K562 (cell line): ENCODE measurements at regions of chr1 and their contacts with region 1.

Region 1: DNA sequence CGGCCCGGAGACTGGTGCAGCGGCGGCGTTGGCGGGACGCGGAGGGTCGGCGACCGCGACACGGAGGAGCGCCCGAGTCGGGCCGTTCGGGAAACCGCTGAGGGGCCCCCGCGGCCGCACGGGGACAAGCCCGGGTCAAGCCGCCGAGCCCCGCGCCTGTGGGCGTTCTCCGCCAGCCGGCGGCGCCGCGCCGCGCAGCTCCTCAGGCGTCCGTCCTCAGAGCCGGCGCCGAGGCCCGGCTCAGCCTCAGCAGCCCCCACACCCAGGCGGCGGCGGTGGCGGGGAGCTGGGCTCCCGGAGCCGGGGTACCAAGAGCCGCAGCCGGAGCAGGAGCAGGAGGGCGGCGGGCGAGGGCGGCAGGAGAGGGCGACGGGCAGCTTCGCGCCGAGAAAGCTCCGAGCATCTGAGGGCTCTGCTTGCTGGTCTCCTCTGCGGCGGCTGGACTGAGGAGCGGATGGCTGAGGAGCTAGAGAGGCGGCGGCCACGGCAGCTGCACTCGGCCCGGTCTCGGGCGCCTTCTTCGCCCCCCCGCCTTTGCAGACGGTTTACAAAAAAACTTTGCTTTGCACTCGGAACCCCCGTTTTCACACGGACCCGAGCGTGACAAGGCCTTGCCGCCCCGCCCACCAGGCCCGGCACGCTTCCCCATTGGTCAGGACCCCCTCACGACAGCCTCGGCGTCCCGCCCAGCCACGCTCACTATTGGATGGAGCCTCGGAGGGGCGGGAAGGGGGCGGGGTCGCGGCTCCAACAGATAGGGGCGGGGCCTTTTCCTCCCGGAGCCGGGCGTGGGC is at the start of gene SLC30A1:
- DNase-seq: peak; percentile 100
- ATAC-seq: peak; percentile 92
- H3K4me3 ChIP-seq: peak within 1 kb of the TSS; percentile 75
- H3K27ac ChIP-seq: peak within 1 kb of the TSS; percentile 84
- H3K4me1 ChIP-seq: peaks cover 26% of the 10 kb centered on the region in 2 experiments; a peak in 4 of 5 replicates
- H3K27me3 ChIP-seq: no peaks in the 10 kb centered on the region
- CTCF ChIP-seq: peak in 2 of 3 experiments; percentile 17 to 41; a peak in 1 of 6 replicates
- EP300 ChIP-seq: peak; percentile 23; the same call in 1 of the 2 replicates
- POLR2A ChIP-seq: peak; percentile 82
- RAD21 ChIP-seq: peak; percentile 17 to 31; a peak in 2 of 4 replicates
- polyA plus RNA-seq, gene SLC30A1: 4.1 to 4.2 TPM

Region 2: GRCh38 chr1:211589782-211590721 is 11.2 kb after region 1 on chr1:
- CTCF ChIA-PET with region 1: no interaction called
- POLR2A ChIA-PET with region 1: interaction called, 16 read pairs
- in situ Hi-C with region 1: no loop called
- intact Hi-C with region 1: no loop called
- DNase-seq: peak in 1 of 4 experiments; percentile 54
- ATAC-seq: peak; percentile 73
- H3K4me3 ChIP-seq: no peak overlapping the region
- H3K27ac ChIP-seq: no peak overlapping the region; the same call in 2 of the 3 replicates
- H3K4me1 ChIP-seq: peaks cover 3 to 17% of the 10 kb centered on the region in 2 experiments; a peak in 3 of 5 replicates
- H3K27me3 ChIP-seq: no peaks in the 10 kb centered on the region
- CTCF ChIP-seq: no peak
- EP300 ChIP-seq: no peak
- POLR2A ChIP-seq: no peak
- RAD21 ChIP-seq: 0 out of 4 replicates have a peak, but pooled peaks of 1 of the 2 experiments have one; percentile 13

Region 3: DNA sequence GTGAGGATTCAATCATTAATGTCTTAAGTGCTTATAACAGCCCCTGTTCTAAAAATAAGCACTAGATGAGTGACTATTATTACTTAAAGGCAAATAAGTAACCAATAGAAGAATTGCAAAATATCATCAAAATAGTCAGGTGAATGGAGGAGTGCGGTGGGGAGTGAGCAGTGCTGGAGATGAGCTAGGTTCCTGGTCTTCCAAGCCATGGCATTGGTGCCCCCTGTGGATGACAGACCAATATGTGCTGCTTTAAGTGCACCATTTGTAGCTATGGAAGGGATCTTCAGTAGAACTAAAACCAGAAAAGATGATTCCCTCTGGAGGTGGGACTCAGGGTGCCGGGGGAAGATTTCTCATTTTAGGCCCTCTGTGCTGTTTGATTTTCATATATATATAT is 46.2 kb after region 1 on chr1:
- CTCF ChIA-PET with region 1: no interaction called
- POLR2A ChIA-PET with region 1: no interaction called
- in situ Hi-C with region 1: no loop called
- intact Hi-C with region 1: loop called (anchors 1 kb)
- DNase-seq: peak in 3 of 4 experiments; percentile 48 to 68 (median 63)
- ATAC-seq: peak; percentile 77
- H3K4me3 ChIP-seq: no peak overlapping the region
- H3K27ac ChIP-seq: no peak overlapping the region
- H3K4me1 ChIP-seq: peaks cover 14 to 21% of the 10 kb centered on the region in 2 experiments; a peak in 4 of 5 replicates
- H3K27me3 ChIP-seq: no peaks in the 10 kb centered on the region
- CTCF ChIP-seq: peak; percentile 57 to 72 (median 64)
- EP300 ChIP-seq: no peak
- POLR2A ChIP-seq: no peak
- RAD21 ChIP-seq: peak; percentile 65 to 71